ENCODE measurements at regions of chr2 and their contacts with region 1.

Region 1: GRCh38 chr2:152717228-152718075 is at the start of gene PRPF40A:
- DNase-seq: peak; percentile 99
- H3K4me3 ChIP-seq: peak within 1 kb of the TSS; percentile 88
- H3K4me3 Mint-ChIP-seq: peak within 1 kb of the TSS; percentile 96
- H3K27ac Mint-ChIP-seq: peak within 1 kb of the TSS; percentile 97
- H3K4me1 ChIP-seq: peaks cover 15% of the 10 kb centered on the region; the same call in 1 of the 2 replicates
- H3K4me1 Mint-ChIP-seq: peaks cover 22% of the 10 kb centered on the region
- H3K27me3 ChIP-seq: no peaks in the 10 kb centered on the region
- H3K27me3 Mint-ChIP-seq: no peaks in the 10 kb centered on the region
- CTCF ChIP-seq: no peak
- total RNA-seq, gene PRPF40A: 127 and 138 TPM in 2 replicates

Region 2: DNA sequence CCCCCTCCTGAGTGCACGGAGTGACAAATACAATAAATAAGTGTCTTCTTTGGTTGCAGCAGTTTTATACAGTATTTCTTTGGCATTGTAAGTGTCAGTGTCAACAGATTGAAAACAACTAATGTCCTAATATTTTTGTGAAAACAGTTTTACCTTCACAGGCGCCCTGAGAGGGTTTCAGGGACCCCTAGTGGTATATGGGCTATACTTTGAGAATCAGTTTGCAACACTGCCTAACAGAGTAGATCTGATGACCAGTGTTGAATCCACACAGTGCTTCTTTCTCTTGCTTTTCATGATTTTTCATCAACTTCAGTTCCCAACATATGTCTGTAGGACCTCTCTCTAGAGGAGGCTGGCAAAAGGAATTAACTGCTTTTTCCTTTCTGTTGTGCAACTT is 162.4 kb before region 1 on chr2:
- CTCF ChIA-PET with region 1: no interaction called
- POLR2A ChIA-PET with region 1: no interaction called
- intact Hi-C with region 1: no loop called
- DNase-seq: peak in 1 of 2 experiments; percentile 28
- H3K4me3 ChIP-seq: no peak overlapping the region
- H3K4me3 Mint-ChIP-seq: no peak overlapping the region
- H3K27ac Mint-ChIP-seq: no peak overlapping the region
- H3K4me1 ChIP-seq: peaks cover 2% of the 10 kb centered on the region; the same call in 1 of the 2 replicates
- H3K4me1 Mint-ChIP-seq: peaks cover 6% of the 10 kb centered on the region
- H3K27me3 ChIP-seq: no peaks in the 10 kb centered on the region
- H3K27me3 Mint-ChIP-seq: no peaks in the 10 kb centered on the region
- CTCF ChIP-seq: peak; percentile 41 to 69

Region 3: DNA sequence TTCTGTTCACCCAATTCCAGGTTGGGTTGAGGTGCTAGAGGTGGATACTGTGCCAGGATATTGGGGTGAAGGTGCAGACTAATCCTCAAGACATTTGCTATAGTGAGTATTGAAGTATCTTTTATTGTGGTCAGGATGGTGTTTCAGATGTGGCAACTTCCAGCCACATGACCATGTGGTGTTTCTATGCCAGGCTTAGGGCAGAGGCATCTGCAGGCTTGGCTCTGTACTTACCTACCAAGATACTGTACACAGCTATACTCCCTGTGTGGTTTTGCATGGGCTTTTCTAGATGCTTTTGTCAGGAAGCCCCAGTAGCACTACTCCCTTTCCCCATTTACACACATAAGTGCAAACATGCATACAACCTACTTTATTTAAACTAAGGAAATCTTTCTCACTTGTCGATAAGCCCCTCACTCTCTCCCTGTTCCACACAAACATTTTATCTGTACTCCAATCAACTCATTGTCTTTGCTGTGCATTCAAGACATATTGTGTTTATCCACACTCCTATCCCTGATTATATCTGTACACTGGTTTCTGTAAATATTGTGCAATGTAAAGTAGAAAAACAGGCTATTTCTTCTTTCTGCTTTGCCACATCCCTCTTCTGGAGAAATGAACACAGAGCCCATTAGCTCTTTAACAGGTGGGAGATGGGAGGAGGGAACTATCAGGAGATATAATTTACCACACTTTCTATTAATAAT is 13.3 kb after region 1 on chr2:
- CTCF ChIA-PET with region 1: interaction called, 5 read pairs
- POLR2A ChIA-PET with region 1: interaction called, 7 read pairs
- intact Hi-C with region 1: loop called (anchors 1 kb)
- DNase-seq: peak in 1 of 2 experiments; percentile 9
- H3K4me3 ChIP-seq: no peak overlapping the region
- H3K4me3 Mint-ChIP-seq: no peak overlapping the region
- H3K27ac Mint-ChIP-seq: no peak overlapping the region
- H3K4me1 ChIP-seq: no peaks in the 10 kb centered on the region
- H3K4me1 Mint-ChIP-seq: peaks cover 7% of the 10 kb centered on the region
- H3K27me3 ChIP-seq: no peaks in the 10 kb centered on the region
- H3K27me3 Mint-ChIP-seq: no peaks in the 10 kb centered on the region
- CTCF ChIP-seq: no peak

Region 4: GRCh38 chr2:152740743-152741328 is 23.4 kb after region 1 on chr2:
- CTCF ChIA-PET with region 1: interaction called, 11 read pairs
- POLR2A ChIA-PET with region 1: interaction called, 3 read pairs
- intact Hi-C with region 1: loop called (anchors 2 kb)
- DNase-seq: peak in 1 of 2 experiments; percentile 42
- H3K4me3 ChIP-seq: no peak overlapping the region
- H3K4me3 Mint-ChIP-seq: no peak overlapping the region
- H3K27ac Mint-ChIP-seq: no peak overlapping the region
- H3K4me1 ChIP-seq: no peaks in the 10 kb centered on the region
- H3K4me1 Mint-ChIP-seq: no peaks in the 10 kb centered on the region
- H3K27me3 ChIP-seq: no peaks in the 10 kb centered on the region
- H3K27me3 Mint-ChIP-seq: no peaks in the 10 kb centered on the region
- CTCF ChIP-seq: peak; percentile 80 to 89

Measured in Caco-2 (cell line).